Dendritic cell treated with granulocyte-macrophage colony-stimulating factor and Interleukin-4, amounts not matched to agents 40 ng/mL and 50 ng/mL, for 4 days (primary cell): ENCODE measurements at regions of chr10 and their contacts with region 1.

Region 1: DNA sequence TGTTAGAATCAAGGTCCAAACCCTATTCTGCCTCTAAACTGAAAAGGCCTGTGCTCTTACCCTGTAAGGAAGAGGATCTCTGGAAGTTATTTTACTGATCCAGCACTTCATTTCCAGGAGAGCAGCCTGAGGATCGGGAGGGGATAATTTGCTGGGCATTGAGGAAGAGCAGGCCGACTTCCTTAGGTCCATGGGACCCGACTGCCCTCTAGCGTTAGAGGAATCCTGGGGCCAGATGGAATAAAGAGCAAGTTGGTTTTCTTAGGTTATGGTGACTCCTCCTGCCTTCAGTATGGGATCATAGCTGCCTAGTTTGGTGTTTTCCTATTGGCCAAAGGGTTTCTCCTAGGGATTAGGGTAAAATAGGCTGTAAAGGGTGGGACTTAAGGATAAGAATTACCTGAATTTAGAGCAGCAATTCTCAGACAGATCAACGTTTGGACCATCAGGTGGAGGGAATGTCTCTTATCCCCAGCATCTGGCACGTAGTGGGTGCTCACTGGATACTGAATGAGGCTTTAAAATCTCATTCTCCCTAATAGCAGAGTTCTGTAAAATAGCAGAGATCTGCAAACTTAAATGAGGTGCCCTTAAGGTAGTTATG is 40.0 kb upstream of the SORBS1 start:
- H3K4me3 Mint-ChIP-seq: no peak overlapping the region
- H3K27ac Mint-ChIP-seq: no peak overlapping the region
- H3K4me1 Mint-ChIP-seq: peaks cover 7% of the 10 kb centered on the region
- H3K27me3 Mint-ChIP-seq: no peaks in the 10 kb centered on the region

Region 2: GRCh38 chr10:95430231-95430951 is 170.8 kb before region 1 on chr10:
- intact Hi-C with region 1: loop called (anchors 1 kb)
- H3K4me3 Mint-ChIP-seq: no peak overlapping the region
- H3K27ac Mint-ChIP-seq: no peak overlapping the region
- H3K4me1 Mint-ChIP-seq: peaks cover 17% of the 10 kb centered on the region
- H3K27me3 Mint-ChIP-seq: peaks cover 9% of the 10 kb centered on the region